Activated CD8-positive, alpha-beta memory T cell treated with anti-CD3 and anti-CD28 coated beads, Interleukin-2, amount 10 ng/mL, durations not matched to agents 7 days and 5 days (primary cell): ENCODE measurements at regions of chr2 and their contacts with region 1.

Region 1: GRCh38 chr2:112626604-112627059 is 19.1 kb upstream of the SLC20A1 start:
- DNase-seq: peak; percentile 80
- ATAC-seq: peak; percentile 55
- H3K4me3 Mint-ChIP-seq: no peak overlapping the region
- H3K27ac Mint-ChIP-seq: peak overlapping the region; percentile 72
- H3K4me1 Mint-ChIP-seq: peaks cover 74% of the 10 kb centered on the region
- H3K27me3 Mint-ChIP-seq: peaks cover 2% of the 10 kb centered on the region

Region 2: GRCh38 chr2:112534826-112535225 is 91.8 kb before region 1 on chr2:
- CTCF ChIA-PET with region 1: no interaction called
- DNase-seq: no peak
- ATAC-seq: no peak
- H3K4me3 Mint-ChIP-seq: no peak overlapping the region
- H3K27ac Mint-ChIP-seq: no peak overlapping the region
- H3K4me1 Mint-ChIP-seq: no peaks in the 10 kb centered on the region
- H3K27me3 Mint-ChIP-seq: no peaks in the 10 kb centered on the region

Region 3: GRCh38 chr2:112584134-112584890 is 42.3 kb before region 1 on chr2 and contains the start of gene CHCHD5:
- CTCF ChIA-PET with region 1: interaction called, 21 read pairs
- DNase-seq: peak; percentile 98
- ATAC-seq: peak; percentile 90
- H3K4me3 Mint-ChIP-seq: peak within 1 kb of the TSS; percentile 83
- H3K27ac Mint-ChIP-seq: peak within 1 kb of the TSS; percentile 96
- H3K4me1 Mint-ChIP-seq: peaks cover 39% of the 10 kb centered on the region
- H3K27me3 Mint-ChIP-seq: no peaks in the 10 kb centered on the region
- total RNA-seq, gene CHCHD5: 25.4 to 27.8 TPM

Region 4: DNA sequence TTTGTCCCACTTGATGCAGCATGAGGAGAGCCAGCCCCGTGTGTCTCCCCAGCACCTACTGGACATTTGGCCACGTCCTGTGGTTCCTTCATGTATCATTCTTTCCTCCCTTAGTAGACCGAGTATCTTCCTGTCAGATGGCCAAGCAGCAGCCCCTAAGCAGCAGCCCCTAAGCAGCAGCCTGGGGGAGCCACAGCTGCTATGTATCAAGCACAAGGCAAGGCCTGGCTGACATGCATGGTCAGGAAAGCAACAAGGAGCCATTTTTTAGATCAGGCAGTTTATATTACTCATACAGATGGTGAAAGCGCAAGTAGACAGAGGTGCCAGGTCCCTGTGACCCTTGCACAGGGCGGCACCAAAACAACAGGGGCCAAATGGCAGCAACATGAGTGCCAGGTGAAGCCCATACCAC is 20.1 kb before region 1 on chr2:
- CTCF ChIA-PET with region 1: interaction called, 46 read pairs
- DNase-seq: no peak
- ATAC-seq: no peak
- H3K4me3 Mint-ChIP-seq: no peak overlapping the region
- H3K27ac Mint-ChIP-seq: no peak overlapping the region
- H3K4me1 Mint-ChIP-seq: peaks cover 2% of the 10 kb centered on the region
- H3K27me3 Mint-ChIP-seq: peaks cover 19% of the 10 kb centered on the region

Region 5: DNA sequence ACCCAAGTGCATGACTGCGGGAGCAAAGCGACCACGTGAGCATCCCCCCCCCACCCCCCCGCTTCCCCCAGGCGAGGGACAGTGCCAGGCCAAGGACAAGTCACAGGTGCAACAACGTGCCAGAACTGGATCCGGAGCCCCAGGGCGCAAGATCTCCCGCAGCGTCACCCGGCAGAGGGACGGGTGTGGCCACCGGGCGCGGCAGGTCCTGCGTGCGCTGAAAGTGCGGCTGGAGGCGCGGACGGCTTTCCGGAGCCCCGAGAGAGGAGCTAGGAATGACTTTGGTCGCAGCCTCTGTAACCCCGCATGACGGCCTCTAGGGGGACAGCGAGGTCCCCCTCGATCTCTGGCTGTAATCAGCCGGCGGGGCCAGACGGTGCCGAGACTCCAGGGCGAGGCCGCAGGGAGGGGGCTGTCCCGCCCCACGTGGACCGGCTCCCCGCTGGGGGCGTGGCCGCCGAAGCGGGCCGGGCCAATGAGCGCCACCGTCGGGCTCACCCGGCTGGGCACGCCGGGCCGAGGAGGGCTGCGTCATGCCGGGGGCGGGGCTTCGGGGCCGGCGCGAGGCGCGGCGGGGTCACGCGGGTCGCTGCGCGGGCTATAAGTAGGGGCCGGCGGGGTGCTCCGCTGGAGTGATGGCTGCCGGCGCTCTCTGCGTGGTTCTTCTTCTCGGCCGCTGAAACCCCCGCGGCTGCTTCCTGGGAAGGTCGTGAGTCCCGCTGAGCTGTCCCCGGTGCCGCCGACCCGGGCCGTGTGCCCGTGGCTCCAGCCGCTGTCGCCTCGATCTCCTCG is 18.9 kb after region 1 on chr2 and contains the start of gene SLC20A1:
- CTCF ChIA-PET with region 1: interaction called, 143 read pairs
- DNase-seq: peak; percentile 98
- ATAC-seq: peak; percentile 92
- H3K4me3 Mint-ChIP-seq: peak within 1 kb of the TSS; percentile 96
- H3K27ac Mint-ChIP-seq: peak within 1 kb of the TSS; percentile 84
- H3K4me1 Mint-ChIP-seq: peaks cover 62% of the 10 kb centered on the region
- H3K27me3 Mint-ChIP-seq: no peaks in the 10 kb centered on the region
- total RNA-seq, gene SLC20A1: 134 to 146 TPM

Region 6: DNA sequence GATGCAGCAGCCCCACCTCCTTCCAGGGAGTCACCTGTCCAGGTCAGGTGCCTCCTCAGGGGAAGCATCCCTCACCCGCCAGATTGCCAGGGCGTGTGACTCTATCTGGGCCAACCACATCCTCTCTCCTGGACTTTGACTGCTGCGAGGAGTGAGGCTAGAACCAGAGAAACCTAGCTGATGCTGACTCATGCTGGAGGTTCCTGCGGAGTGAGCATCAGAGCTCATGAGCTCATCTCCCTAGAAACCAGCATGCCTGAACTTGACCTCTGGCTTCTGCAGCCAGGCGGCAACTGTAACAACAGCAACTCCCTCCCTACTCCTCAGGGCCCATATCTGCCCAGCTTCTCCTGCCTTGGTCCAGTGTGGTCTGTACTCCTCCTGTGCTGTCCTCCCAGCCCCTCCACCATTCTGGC is 65.9 kb after region 1 on chr2:
- CTCF ChIA-PET with region 1: interaction called, 155 read pairs
- DNase-seq: peak; percentile 92
- ATAC-seq: peak; percentile 92
- H3K4me3 Mint-ChIP-seq: peak overlapping the region; percentile 33
- H3K27ac Mint-ChIP-seq: peak overlapping the region; percentile 95
- H3K4me1 Mint-ChIP-seq: peaks cover 45% of the 10 kb centered on the region
- H3K27me3 Mint-ChIP-seq: no peaks in the 10 kb centered on the region

Region 7: GRCh38 chr2:112706170-112706664 is 79.6 kb after region 1 on chr2:
- CTCF ChIA-PET with region 1: interaction called, 13 read pairs
- DNase-seq: peak; percentile 96
- ATAC-seq: peak; percentile 97
- H3K4me3 Mint-ChIP-seq: peak overlapping the region; percentile 33
- H3K27ac Mint-ChIP-seq: peak overlapping the region; percentile 84
- H3K4me1 Mint-ChIP-seq: peaks cover 66% of the 10 kb centered on the region
- H3K27me3 Mint-ChIP-seq: peaks cover 3% of the 10 kb centered on the region

Region 8: GRCh38 chr2:112772322-112772721 is 145.7 kb after region 1 on chr2:
- CTCF ChIA-PET with region 1: no interaction called
- DNase-seq: no peak
- ATAC-seq: no peak
- H3K4me3 Mint-ChIP-seq: no peak overlapping the region
- H3K27ac Mint-ChIP-seq: no peak overlapping the region
- H3K4me1 Mint-ChIP-seq: peaks cover 30% of the 10 kb centered on the region
- H3K27me3 Mint-ChIP-seq: peaks cover 6% of the 10 kb centered on the region

Region 9: DNA sequence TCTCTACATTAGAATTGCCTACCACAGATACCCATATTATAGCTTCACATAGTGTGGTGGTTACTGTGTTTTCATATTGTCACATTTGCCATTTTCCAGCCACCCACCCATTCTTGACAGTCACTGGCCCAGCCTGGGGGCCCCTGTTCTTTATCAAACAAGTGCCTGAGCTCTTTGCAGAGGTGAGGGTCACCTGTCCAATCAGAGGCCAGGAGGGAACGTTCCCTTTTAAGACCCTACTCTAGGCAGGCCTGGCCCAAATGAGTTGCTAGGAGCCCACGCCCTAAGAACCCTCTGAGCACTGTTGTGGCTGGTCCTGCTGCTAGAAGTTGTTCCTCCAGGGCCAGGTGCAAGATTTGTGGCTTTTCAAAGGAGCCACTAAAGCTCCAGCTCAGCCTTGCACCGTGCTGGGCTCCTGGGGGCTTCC is 289.5 kb after region 1 on chr2:
- CTCF ChIA-PET with region 1: no interaction called
- DNase-seq: peak; percentile 60
- ATAC-seq: peak; percentile 43
- H3K4me3 Mint-ChIP-seq: no peak overlapping the region
- H3K27ac Mint-ChIP-seq: peak overlapping the region; percentile 80
- H3K4me1 Mint-ChIP-seq: peaks cover 40% of the 10 kb centered on the region
- H3K27me3 Mint-ChIP-seq: no peaks in the 10 kb centered on the region